Heart left ventricle (tissue), 16 donors: ENCODE measurements at regions of chr1 and their contacts with region 1.

Region 1: GRCh38 chr1:6343506-6344405 is 49.8 kb downstream of the ACOT7 start:
- DNase-seq: peak; percentile 52 to 76 (median 67)
- ATAC-seq: peak; percentile 72 to 85 (median 82)
- H3K4me3 ChIP-seq: no peak overlapping the region
- H3K27ac ChIP-seq: no peak overlapping the region
- H3K4me1 ChIP-seq: peaks cover 0 to 14% (median 5%) of the 10 kb centered on the region in 12 donors
- H3K27me3 ChIP-seq: no peaks in the 10 kb centered on the region
- CTCF ChIP-seq: peak; percentile 76 to 89 (median 82)
- POLR2A ChIP-seq: no peak

Region 2: GRCh38 chr1:6041432-6042062 is 302.2 kb before region 1 on chr1:
- intact Hi-C with region 1: loop called in 1 of 10 experiments (anchors 10 kb)
- DNase-seq: no peak
- ATAC-seq: peak in 2 of 4 donors; percentile 44 to 50
- H3K4me3 ChIP-seq: no peak overlapping the region
- H3K27ac ChIP-seq: no peak overlapping the region
- H3K4me1 ChIP-seq: peaks cover 0 to 6% (median 0%) of the 10 kb centered on the region in 12 donors
- H3K27me3 ChIP-seq: no peaks in the 10 kb centered on the region
- CTCF ChIP-seq: peak in 10 of 12 donors; percentile 27 to 54 (median 49)
- POLR2A ChIP-seq: no peak

Region 3: DNA sequence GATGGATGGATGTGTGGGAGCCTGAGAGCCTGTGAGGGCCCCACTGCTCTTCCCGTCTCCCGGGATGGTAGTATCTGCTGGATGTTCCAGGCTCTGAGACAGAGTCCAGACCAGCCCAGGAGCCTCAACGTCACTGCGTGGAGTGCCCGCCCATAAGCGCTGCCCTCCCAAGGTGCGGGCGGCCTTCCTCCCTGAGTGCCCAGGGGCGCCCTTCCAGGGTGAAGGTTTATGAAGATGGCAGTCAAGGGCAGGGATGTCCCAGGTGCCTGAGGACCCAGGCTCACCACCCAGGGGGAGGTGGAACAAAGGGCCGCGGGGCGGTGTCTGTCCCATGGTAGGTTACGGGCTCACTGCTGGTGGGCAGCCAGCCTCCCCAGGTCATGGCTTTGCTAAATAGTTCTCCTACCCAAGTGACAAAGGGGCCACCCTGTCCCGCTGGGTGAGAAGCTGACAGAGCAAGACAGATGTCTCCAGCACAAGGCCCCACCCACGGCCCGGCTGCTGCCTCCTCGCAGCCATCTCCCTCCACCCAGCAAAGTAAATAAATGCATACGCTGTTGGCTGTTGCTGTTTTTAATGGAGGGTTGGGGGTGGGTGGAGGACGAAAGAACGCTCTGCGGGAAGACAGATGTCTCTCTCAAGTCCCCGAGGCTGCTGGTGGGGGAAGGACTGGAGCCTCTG is 73.9 kb before region 1 on chr1:
- intact Hi-C with region 1: loop called in 1 of 10 experiments (anchors 5 kb)
- DNase-seq: no peak
- ATAC-seq: no peak
- H3K4me3 ChIP-seq: no peak overlapping the region
- H3K27ac ChIP-seq: no peak overlapping the region
- H3K4me1 ChIP-seq: peaks cover 0 to 5% (median 0%) of the 10 kb centered on the region in 12 donors
- H3K27me3 ChIP-seq: no peaks in the 10 kb centered on the region
- CTCF ChIP-seq: no peak
- POLR2A ChIP-seq: no peak

Region 4: GRCh38 chr1:6401673-6402072 is 57.9 kb after region 1 on chr1:
- intact Hi-C with region 1: loop called in 8 of 10 experiments (anchors 1 to 5 kb)
- DNase-seq: peak in 1 of 5 donors; percentile 7
- ATAC-seq: no peak
- H3K4me3 ChIP-seq: no peak overlapping the region
- H3K27ac ChIP-seq: no peak overlapping the region
- H3K4me1 ChIP-seq: no peaks in the 10 kb centered on the region
- H3K27me3 ChIP-seq: peaks cover 0 to 16% (median 0%) of the 10 kb centered on the region in 9 donors
- CTCF ChIP-seq: no peak
- POLR2A ChIP-seq: no peak

Region 5: GRCh38 chr1:6409053-6409452 is 65.3 kb after region 1 on chr1:
- intact Hi-C with region 1: loop called in 8 of 10 experiments (anchors 1 to 5 kb)
- DNase-seq: peak in 1 of 5 donors; percentile 4
- ATAC-seq: no peak
- H3K4me3 ChIP-seq: no peak overlapping the region
- H3K27ac ChIP-seq: no peak overlapping the region
- H3K4me1 ChIP-seq: no peaks in the 10 kb centered on the region
- H3K27me3 ChIP-seq: peaks cover 0 to 38% (median 7%) of the 10 kb centered on the region in 9 donors
- CTCF ChIP-seq: no peak
- POLR2A ChIP-seq: no peak

Region 6: DNA sequence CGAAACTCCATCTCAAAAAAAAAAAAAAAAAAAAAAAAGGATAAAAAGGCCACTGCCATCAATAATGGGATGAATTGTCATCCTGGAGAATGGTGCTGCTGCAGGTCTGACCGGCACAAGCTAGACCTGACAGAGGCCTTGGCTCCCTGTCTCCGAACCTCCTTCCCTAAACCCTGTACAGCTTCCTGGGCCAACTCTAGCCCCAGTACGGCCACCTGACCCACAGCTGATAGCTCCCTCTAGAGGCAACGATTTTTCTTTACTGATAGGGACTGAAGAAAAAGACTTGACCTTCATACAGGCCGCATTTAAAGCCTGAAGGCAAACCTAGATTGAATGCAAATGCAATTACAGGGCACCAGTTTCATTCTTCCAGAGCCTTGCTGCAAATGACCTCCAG is 179.8 kb after region 1 on chr1:
- intact Hi-C with region 1: no loop called
- DNase-seq: peak in 2 of 5 donors; percentile 26 to 38
- ATAC-seq: peak in 3 of 4 donors; percentile 62 to 70 (median 70)
- H3K4me3 ChIP-seq: no peak overlapping the region
- H3K27ac ChIP-seq: no peak overlapping the region
- H3K4me1 ChIP-seq: peaks cover 0 to 20% (median 9%) of the 10 kb centered on the region in 12 donors
- H3K27me3 ChIP-seq: no peaks in the 10 kb centered on the region
- CTCF ChIP-seq: peak; percentile 41 to 68 (median 50)
- POLR2A ChIP-seq: no peak